ENCODE measurements at regions of chr3 and their contacts with region 1.

Region 1: GRCh38 chr3:190224863-190225692 is 97.2 kb downstream of the CLDN1 start:
- DNase-seq: peak in 2 of 5 donors; percentile 41 to 47
- H3K4me3 ChIP-seq: no peak overlapping the region
- H3K27ac ChIP-seq: no peak overlapping the region
- H3K4me1 ChIP-seq: no peaks in the 10 kb centered on the region
- H3K27me3 ChIP-seq: no peaks in the 10 kb centered on the region
- CTCF ChIP-seq: peak; percentile 31

Region 2: DNA sequence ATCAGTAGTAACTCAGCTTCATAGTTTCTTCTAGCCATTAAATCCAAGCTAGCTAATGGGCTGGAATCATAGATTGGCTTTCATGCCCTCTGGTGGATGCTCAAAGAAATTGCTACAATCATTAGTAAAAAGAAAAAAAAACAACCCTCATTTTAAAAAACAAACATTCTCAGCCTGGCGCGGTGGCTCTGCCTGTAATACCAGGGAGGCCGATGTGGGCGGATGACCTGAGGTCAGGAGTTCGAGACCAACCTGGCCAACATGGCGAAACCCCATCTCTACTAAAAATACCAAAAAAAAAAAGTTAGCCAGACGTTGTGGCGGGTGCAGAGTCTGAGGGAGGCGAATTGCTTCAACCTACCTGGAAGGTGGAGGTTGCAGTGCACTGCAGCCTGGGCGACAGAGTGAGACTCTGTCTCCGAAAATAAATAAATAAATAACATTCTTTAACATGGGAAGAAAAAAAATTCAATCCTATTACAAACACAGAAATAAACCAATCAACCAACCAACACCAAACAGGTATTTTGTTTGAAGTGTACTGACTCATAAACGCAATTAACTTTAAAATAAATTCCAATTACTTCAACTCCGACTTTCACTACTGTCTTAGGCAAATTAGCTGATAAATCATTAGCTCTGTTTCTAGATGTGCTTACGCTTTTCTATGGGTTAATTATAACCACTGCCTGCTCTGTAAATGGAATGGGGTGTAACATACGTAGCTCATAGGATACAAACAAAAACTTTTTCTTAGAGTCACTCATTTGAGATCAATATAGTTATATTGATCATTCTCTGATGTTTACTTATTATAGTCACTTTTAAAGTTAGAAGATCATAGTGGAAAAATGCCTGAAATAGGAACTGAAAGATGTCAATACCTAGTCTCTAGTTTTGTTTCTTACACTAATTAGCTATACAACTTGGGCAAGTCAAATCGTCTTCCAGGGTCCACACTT is 199.7 kb after region 1 on chr3:
- intact Hi-C with region 1: loop called (anchors 10 kb)
- DNase-seq: peak; percentile 53 to 83 (median 73)
- H3K4me3 ChIP-seq: peak overlapping the region in 1 of 3 donors; percentile 38
- H3K27ac ChIP-seq: no peak overlapping the region
- H3K4me1 ChIP-seq: no peaks in the 10 kb centered on the region
- H3K27me3 ChIP-seq: no peaks in the 10 kb centered on the region
- CTCF ChIP-seq: peak; percentile 59

Measured in kidney (tissue), 22 donors.